Spleen (tissue), 13 donors: ENCODE measurements at regions of chrX and their contacts with region 1.

Region 1: GRCh38 chrX:132622130-132622529 is 133.3 kb upstream of the MBNL3 start:
- DNase-seq: no peak
- H3K4me3 ChIP-seq: no peak overlapping the region
- H3K27ac ChIP-seq: no peak overlapping the region
- H3K4me1 ChIP-seq: no peaks in the 10 kb centered on the region
- H3K27me3 ChIP-seq: peaks cover 0 to 25% (median 0%) of the 10 kb centered on the region in 7 donors
- CTCF ChIP-seq: no peak
- POLR2A ChIP-seq: no peak

Region 2: DNA sequence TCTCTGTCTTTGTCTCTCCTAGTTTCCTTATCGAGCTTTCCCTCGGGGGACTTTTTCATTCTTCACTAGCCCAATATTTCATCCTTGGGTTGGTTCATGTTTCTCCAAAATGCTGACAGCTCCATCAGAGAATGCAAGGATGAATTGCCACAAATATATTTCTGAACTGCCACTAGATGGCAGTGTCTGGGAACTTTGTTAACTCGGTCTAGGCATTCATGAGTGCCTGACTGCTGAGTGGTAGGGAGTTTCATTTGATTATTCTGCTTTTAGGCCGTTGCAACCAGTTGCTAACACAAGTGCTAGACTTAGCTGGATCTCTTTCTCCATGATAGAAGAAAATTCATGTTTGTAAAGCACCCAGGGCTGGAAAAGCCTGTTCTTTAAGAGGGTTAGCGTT is 329.3 kb before region 1 on chrX:
- intact Hi-C with region 1: loop called (anchors 5 kb)
- DNase-seq: no peak
- H3K4me3 ChIP-seq: no peak overlapping the region
- H3K27ac ChIP-seq: no peak overlapping the region
- H3K4me1 ChIP-seq: no peaks in the 10 kb centered on the region
- H3K27me3 ChIP-seq: peaks cover 0 to 9% (median 0%) of the 10 kb centered on the region in 7 donors
- CTCF ChIP-seq: peak in 10 of 11 experiments; percentile 42 to 75 (median 62)
- POLR2A ChIP-seq: no peak